ENCODE measurements at regions of chr11 and their contacts with region 1.

Region 1: GRCh38 chr11:124673333-124674167 is at the starts of genes SIAE and SPA17:
- DNase-seq: peak; percentile 93 to 98 (median 96)
- ATAC-seq: peak; percentile 97
- H3K4me3 ChIP-seq: peak within 1 kb of the TSS; percentile 61 to 64
- H3K27ac ChIP-seq: peak within 1 kb of the TSS; percentile 84 to 92
- H3K4me1 ChIP-seq: peaks cover 9 to 53% of the 10 kb centered on the region in 2 donors
- H3K27me3 ChIP-seq: no peaks in the 10 kb centered on the region
- CTCF ChIP-seq: no peak
- polyA plus RNA-seq, gene SIAE: 13.3 to 17.5 (median 16.1) TPM
- polyA plus RNA-seq, gene SPA17: 9.7 to 20.9 (median 16.5) TPM

Region 2: GRCh38 chr11:124329787-124330478 is 343.6 kb before region 1 on chr11:
- intact Hi-C with region 1: no loop called
- DNase-seq: peak in 1 of 4 donors; percentile 2
- ATAC-seq: no peak
- H3K4me3 ChIP-seq: no peak overlapping the region
- H3K27ac ChIP-seq: no peak overlapping the region
- H3K4me1 ChIP-seq: no peaks in the 10 kb centered on the region
- H3K27me3 ChIP-seq: no peaks in the 10 kb centered on the region
- CTCF ChIP-seq: no peak

Region 3: GRCh38 chr11:124758317-124759203 is 85.0 kb after region 1 on chr11:
- intact Hi-C with region 1: loop called (anchors 5 to 10 kb)
- DNase-seq: peak in 3 of 4 donors; percentile 81 to 93 (median 87)
- ATAC-seq: peak; percentile 72
- H3K4me3 ChIP-seq: peak overlapping the region; percentile 64 to 66
- H3K27ac ChIP-seq: peak overlapping the region; percentile 86 to 89
- H3K4me1 ChIP-seq: peaks cover 4 to 66% of the 10 kb centered on the region in 2 donors
- H3K27me3 ChIP-seq: peaks cover 33 to 70% of the 10 kb centered on the region in 2 donors
- CTCF ChIP-seq: peak; percentile 60 to 77

Region 4: DNA sequence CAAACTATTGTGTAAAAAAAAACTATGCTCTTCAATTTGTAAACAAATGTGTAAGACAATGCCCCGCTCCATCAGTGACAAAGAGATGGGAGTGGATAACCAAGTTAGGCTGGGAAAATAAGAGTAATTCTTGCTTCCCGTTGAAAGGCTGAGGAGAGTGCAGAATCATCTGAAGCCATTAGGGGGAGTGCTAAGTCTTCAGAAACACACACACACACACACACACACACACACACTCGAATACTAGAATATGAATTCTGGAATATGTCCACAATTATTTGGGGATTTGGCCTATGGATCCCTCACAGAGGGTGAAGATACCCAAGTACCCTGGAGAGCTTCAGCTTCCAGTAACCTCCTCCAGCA is 163.9 kb after region 1 on chr11:
- intact Hi-C with region 1: loop called in 1 of 2 experiments (anchors 5 kb)
- DNase-seq: peak in 2 of 4 donors; percentile 50 to 72
- ATAC-seq: peak; percentile 83
- H3K4me3 ChIP-seq: no peak overlapping the region
- H3K27ac ChIP-seq: no peak overlapping the region
- H3K4me1 ChIP-seq: peaks cover 11 to 22% of the 10 kb centered on the region in 2 donors
- H3K27me3 ChIP-seq: peaks cover 39 to 68% of the 10 kb centered on the region in 2 donors
- CTCF ChIP-seq: peak in 1 of 2 donors; percentile 8

Measured in left lung (tissue), 14 donors.